ENCODE measurements at regions of chr5 and their contacts with region 1.

Region 1: DNA sequence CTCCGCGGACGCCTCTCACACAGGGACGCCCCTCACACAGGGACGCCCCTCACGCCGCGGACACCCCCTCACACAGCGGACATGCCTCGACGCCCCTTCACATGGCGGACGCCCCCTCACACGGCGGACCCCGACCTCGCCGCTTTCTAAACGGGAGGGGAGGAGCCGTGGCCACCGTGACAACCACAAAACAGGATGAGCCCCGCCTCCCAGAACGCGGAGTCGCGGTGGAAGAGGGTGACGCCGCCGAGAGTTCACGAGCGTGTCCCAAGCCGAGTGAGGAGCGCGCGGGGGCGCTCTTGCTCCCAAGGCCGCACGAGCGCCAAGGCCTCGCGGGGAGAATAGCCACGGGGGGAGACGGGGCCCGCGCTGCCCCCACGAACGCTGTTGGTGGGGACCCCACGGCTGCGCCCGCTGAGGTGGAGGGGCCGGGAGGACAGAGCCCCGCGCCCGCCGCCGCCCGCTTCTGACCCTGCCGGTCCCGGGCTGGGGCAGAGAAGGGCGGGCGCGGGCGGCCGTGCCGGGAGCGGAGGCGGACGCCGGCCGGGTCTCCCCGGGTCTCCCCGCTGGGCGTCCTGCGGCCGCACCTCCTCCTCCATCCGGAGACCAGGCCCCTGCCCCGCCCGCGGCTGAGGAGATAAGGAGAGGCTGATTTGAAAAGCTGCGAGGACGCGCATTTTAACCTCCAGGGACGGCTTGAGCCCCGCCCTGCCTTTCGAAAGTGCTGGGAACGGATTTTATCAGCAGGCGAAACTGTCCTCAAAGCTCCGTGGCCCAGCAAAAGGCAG is 3.9 kb upstream of the NKD2 start:
- DNase-seq: peak; percentile 42
- H3K4me3 Mint-ChIP-seq: peak overlapping the region; percentile 57
- H3K27ac Mint-ChIP-seq: no peak overlapping the region
- H3K4me1 Mint-ChIP-seq: peaks cover 5% of the 10 kb centered on the region
- H3K27me3 Mint-ChIP-seq: peaks cover 41% of the 10 kb centered on the region

Region 2: GRCh38 chr5:912280-913091 is 92.2 kb before region 1 on chr5:
- intact Hi-C with region 1: loop called (anchors 1 kb)
- DNase-seq: no peak
- H3K4me3 Mint-ChIP-seq: no peak overlapping the region
- H3K27ac Mint-ChIP-seq: peak overlapping the region; percentile 60
- H3K4me1 Mint-ChIP-seq: peaks cover 7% of the 10 kb centered on the region
- H3K27me3 Mint-ChIP-seq: no peaks in the 10 kb centered on the region

Region 3: DNA sequence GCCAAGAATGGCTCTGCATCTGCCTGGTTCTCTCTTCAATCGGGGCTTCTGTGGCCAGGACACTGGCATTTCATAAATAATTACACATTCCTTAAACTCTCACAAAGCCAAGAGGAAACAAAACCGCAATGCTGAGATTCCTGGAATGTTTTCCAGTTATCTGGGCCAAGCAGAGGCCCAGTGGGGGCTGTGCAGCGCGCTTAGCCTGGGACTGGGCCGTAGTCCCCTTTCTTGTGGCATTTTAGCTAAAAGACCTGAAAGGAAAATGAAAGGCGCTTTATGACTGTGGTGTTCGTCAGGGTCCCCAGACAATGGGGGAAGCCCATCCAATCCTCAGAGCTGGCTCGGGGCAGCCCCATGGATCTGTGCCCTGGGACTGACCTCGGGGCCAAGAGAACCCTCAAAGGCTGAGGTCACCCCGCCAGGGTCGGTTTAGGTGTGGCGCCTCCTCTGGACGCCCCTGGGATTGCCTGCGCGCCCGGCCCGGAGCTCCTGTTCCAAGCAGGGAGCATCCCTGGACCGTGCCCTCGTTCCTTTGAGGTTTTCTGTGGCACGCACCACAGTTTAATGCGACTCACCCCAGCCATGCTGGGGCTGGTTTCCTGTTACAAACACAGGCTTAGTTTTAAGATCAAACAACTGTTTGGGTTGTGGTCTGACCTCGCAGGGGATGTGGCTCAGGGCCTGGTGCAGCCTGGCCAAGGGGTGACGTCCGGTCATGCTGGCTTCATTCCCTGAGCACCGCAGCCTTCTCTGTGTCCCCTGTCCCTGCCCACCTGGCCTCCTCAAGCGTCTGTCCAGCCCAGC is 47.5 kb before region 1 on chr5:
- intact Hi-C with region 1: loop called (anchors 2 kb)
- DNase-seq: peak; percentile 42
- H3K4me3 Mint-ChIP-seq: no peak overlapping the region
- H3K27ac Mint-ChIP-seq: no peak overlapping the region
- H3K4me1 Mint-ChIP-seq: peaks cover 15% of the 10 kb centered on the region
- H3K27me3 Mint-ChIP-seq: peaks cover 10% of the 10 kb centered on the region

Measured in activated T-helper 1 cell treated with anti-CD3 and anti-CD28 coated beads, Interleukin-12 subunit alpha, Interleukin-12 subunit beta, Interleukin-2, Interleukin-4 antibody, amounts not matched to agents 30 ng/mL and 10 ng/mL and 1 ng/mL, durations not matched to agents 14 hours and 24 hours and 36 hours (primary cell).